ENCODE measurements at regions of chr17 and their contacts with region 1.

Region 1: DNA sequence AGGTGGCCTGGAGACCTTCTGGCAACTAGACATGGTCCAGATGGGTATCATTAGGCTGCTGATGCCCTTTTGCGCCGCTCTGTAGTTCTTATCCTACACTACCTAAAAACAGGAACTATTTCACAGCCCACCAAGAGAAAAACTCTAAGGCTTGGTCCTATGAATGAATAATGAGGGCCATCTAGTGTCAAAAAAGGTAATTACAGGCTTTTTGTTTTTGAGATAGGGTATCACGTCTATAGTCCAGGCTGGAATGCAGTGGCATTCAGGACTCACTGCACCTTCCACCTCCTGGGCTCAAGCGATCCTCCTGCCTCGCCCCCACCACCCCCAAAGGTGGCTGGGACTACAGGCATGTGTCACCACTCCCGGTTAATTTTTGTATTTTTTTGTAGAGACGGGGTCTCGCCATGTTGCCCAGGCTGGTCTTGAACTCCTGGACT is 20.9 kb downstream of the COIL start:
- DNase-seq: peak; percentile 2 to 59
- H3K4me3 ChIP-seq: no peak overlapping the region
- H3K27ac ChIP-seq: no peak overlapping the region
- H3K4me1 ChIP-seq: peaks cover 19% of the 10 kb centered on the region
- H3K27me3 ChIP-seq: no peaks in the 10 kb centered on the region
- CTCF ChIP-seq: peak; percentile 95

Region 2: DNA sequence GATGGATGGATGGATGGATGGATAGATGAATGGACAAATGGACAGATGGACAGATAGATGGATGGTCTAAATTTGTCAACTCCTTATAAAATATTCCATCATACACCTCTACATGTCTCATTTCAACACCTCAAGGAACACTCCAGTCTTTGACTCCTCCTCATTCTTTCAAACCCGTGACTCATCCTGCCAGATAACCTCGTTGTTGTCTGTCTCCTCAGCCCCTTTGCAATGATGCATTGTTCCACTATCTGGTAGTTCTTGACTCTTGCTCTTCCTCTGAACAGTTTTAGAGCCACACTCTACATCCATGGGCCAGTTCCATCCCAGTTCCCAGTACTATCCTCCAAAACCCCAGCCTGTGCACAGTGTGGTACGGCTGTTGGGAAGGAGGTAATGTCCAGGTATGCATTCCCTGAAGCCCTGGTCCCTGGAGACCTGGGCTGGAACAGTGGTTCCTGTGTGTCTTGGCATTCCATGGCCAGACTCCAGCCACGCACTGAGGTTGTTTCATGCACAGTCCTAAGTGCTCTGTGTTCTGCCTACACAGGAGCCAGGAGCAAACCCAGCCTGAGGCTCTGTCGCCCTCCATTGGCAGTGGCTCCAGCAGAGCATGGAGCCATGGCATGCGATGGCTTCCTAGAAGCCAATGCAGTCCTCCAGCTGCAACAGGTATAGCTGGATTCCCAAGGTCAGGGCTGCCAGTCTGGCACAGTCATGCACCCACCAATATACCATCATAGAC is 211.9 kb before region 1 on chr17:
- CTCF ChIA-PET with region 1: no interaction called
- POLR2A ChIA-PET with region 1: no interaction called
- intact Hi-C with region 1: loop called (anchors 10 kb)
- DNase-seq: no peak
- H3K4me3 ChIP-seq: no peak overlapping the region
- H3K27ac ChIP-seq: no peak overlapping the region
- H3K4me1 ChIP-seq: no peaks in the 10 kb centered on the region
- H3K27me3 ChIP-seq: peaks cover 11% of the 10 kb centered on the region
- CTCF ChIP-seq: no peak

Region 3: GRCh38 chr17:56819431-56820145 is 120.3 kb before region 1 on chr17:
- CTCF ChIA-PET with region 1: interaction called, 7 read pairs
- POLR2A ChIA-PET with region 1: interaction called, 3 read pairs
- intact Hi-C with region 1: loop called (anchors 1 kb)
- DNase-seq: peak; percentile 54 to 65
- H3K4me3 ChIP-seq: no peak overlapping the region
- H3K27ac ChIP-seq: no peak overlapping the region
- H3K4me1 ChIP-seq: 0 out of 2 replicates have a peak, but pooled peaks cover 8% of the 10 kb centered on the region
- H3K27me3 ChIP-seq: no peaks in the 10 kb centered on the region
- CTCF ChIP-seq: peak; percentile 92

Region 4: DNA sequence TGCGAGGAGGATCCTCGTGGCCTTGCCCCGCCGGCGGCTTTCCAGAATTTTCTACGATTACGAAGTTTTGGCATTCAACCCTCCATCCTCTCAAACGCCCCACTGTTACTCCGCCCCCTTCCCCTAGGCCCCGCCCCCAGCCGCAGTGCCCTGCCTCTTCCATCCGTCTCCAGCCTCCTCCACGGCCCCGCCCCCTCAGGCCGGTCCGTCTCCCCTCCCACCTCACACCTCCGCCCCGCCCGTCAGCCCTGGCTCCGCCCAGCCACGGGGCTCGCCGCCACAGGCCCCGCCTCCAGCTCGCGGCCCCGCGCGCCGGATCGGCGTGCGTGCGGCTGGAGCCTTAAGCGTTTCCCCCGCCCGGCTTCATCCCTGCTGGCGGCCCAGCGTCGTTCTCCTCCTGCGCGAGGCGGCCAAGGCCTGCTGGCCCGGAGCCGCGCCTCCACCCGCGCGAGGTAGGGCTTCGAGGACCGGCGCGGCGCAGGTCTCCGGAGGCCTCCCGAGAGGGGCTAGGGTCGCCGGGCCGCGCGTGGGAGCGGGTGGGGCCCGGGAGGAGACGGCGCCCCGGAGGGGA is 106.0 kb before region 1 on chr17 and contains the starts of genes C17orf67 and DGKE:
- CTCF ChIA-PET with region 1: no interaction called
- POLR2A ChIA-PET with region 1: no interaction called
- intact Hi-C with region 1: loop called (anchors 5 kb)
- DNase-seq: peak; percentile 82 to 97
- H3K4me3 ChIP-seq: peak within 1 kb of the TSS; percentile 94
- H3K27ac ChIP-seq: peak within 1 kb of the TSS; percentile 24
- H3K4me1 ChIP-seq: peaks cover 32% of the 10 kb centered on the region
- H3K27me3 ChIP-seq: no peaks in the 10 kb centered on the region
- CTCF ChIP-seq: no peak
- total RNA-seq, gene C17orf67: 4.3 and 6.4 TPM in 2 replicates
- total RNA-seq, gene DGKE: 11.0 and 16.2 TPM in 2 replicates

Region 5: GRCh38 chr17:57050306-57050705 is 110.4 kb after region 1 on chr17:
- CTCF ChIA-PET with region 1: no interaction called
- POLR2A ChIA-PET with region 1: no interaction called
- intact Hi-C with region 1: no loop called
- DNase-seq: no peak
- H3K4me3 ChIP-seq: no peak overlapping the region
- H3K27ac ChIP-seq: no peak overlapping the region
- H3K4me1 ChIP-seq: peaks cover 8% of the 10 kb centered on the region; the same call in 1 of the 2 replicates
- H3K27me3 ChIP-seq: no peaks in the 10 kb centered on the region
- CTCF ChIP-seq: no peak

Measured in PC-9 (cell line).